H1 (cell line): ENCODE measurements at regions of chr12 and their contacts with region 1.

Region 1: GRCh38 chr12:27940756-27941402 is 31.7 kb downstream of the PTHLH start:
- DNase-seq: peak; percentile 63 to 79
- H3K4me3 ChIP-seq: no peak overlapping the region
- H3K27ac ChIP-seq: no peak overlapping the region
- H3K4me1 ChIP-seq: no peaks in the 10 kb centered on the region
- H3K27me3 ChIP-seq: no peaks in the 10 kb centered on the region
- CTCF ChIP-seq: peak; percentile 78 to 88 (median 81)
- EP300 ChIP-seq: no peak
- POLR2A ChIP-seq: no peak
- RAD21 ChIP-seq: peak; percentile 81 to 85

Region 2: GRCh38 chr12:27733052-27733656 is 207.7 kb before region 1 on chr12:
- CTCF ChIA-PET with region 1: interaction called, 13 read pairs
- POLR2A ChIA-PET with region 1: no interaction called
- DNase-seq: no peak
- H3K4me3 ChIP-seq: no peak overlapping the region
- H3K27ac ChIP-seq: no peak overlapping the region
- H3K4me1 ChIP-seq: no peaks in the 10 kb centered on the region
- H3K27me3 ChIP-seq: no peaks in the 10 kb centered on the region
- CTCF ChIP-seq: peak in 2 of 3 experiments; percentile 74 to 75; a peak in 3 of 4 replicates
- EP300 ChIP-seq: no peak
- POLR2A ChIP-seq: no peak
- RAD21 ChIP-seq: peak; percentile 86 to 90

Region 3: GRCh38 chr12:27866373-27867101 is 74.3 kb before region 1 on chr12:
- CTCF ChIA-PET with region 1: no interaction called
- POLR2A ChIA-PET with region 1: no interaction called
- DNase-seq: no peak
- H3K4me3 ChIP-seq: no peak overlapping the region
- H3K27ac ChIP-seq: no peak overlapping the region
- H3K4me1 ChIP-seq: no peaks in the 10 kb centered on the region
- H3K27me3 ChIP-seq: no peaks in the 10 kb centered on the region
- CTCF ChIP-seq: no peak
- EP300 ChIP-seq: no peak
- POLR2A ChIP-seq: no peak
- RAD21 ChIP-seq: no peak

Region 4: DNA sequence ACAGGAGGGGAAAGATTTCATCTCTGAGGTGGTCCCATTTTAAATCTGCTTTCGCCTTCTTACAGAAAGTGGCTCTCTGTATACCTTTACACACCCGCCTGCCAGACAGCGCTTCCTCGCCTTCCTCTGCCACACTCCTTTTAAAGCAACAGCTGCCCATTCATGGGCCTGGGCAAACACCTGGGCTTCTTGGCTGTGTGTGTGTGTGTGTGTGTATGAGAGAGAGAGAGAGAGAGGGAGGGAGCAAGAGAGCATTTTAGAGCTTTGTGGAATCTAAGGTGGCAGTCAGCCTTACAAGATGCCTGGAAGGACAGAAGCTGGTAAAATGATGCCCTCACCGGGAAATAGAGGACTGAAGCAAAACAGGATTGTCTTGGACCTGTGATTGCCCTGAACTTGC is 11.6 kb after region 1 on chr12:
- CTCF ChIA-PET with region 1: interaction called, 10 read pairs
- POLR2A ChIA-PET with region 1: no interaction called
- DNase-seq: no peak
- H3K4me3 ChIP-seq: peak overlapping the region in 1 of 4 experiments; percentile 29; a peak in 1 of 8 replicates
- H3K27ac ChIP-seq: no peak overlapping the region
- H3K4me1 ChIP-seq: peaks cover 0 to 12% (median 6%) of the 10 kb centered on the region in 4 experiments; a peak in 5 of 7 replicates
- H3K27me3 ChIP-seq: no peaks in the 10 kb centered on the region
- CTCF ChIP-seq: no peak
- EP300 ChIP-seq: no peak
- POLR2A ChIP-seq: no peak
- RAD21 ChIP-seq: no peak